ENCODE measurements at regions of chr18 and their contacts with region 1.

Region 1: GRCh38 chr18:31819925-31820229 is 59.2 kb upstream of the SLC25A52 start:
- DNase-seq: no peak
- CTCF ChIP-seq: no peak

Region 2: GRCh38 chr18:31555971-31556747 is 263.7 kb before region 1 on chr18:
- in situ Hi-C with region 1: loop called (anchors 5 kb)
- DNase-seq: peak; percentile 60
- CTCF ChIP-seq: peak; percentile 71

Region 3: DNA sequence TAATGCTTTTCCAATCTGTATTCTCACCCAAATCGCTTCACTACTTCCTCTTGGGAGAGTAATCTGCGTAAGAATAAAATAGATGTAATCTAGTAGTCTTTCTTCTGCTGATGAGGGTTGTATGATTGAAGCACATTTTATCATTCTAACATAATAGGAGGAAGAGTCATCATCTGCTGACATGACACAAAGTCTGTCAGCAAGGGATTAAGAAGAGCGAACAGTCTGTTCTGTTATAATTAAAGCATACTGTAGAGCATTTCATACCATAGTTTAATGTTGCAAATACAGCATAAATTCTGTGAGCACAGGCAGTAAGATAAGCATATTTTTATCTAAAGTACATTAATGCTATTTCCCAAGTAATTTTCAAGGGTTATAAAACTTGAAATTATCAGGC is 69.6 kb before region 1 on chr18:
- in situ Hi-C with region 1: no loop called
- DNase-seq: no peak
- CTCF ChIP-seq: no peak

Measured in GM13976 (cell line).